Right cardiac atrium (tissue), 5 donors: ENCODE measurements at regions of chr19 and their contacts with region 1.

Region 1: GRCh38 chr19:16111160-16111908 is at the start of gene RAB8A:
- DNase-seq: peak; percentile 99 to 100 (median 99)
- ATAC-seq: peak; percentile 98
- H3K4me3 ChIP-seq: peak within 1 kb of the TSS; percentile 83
- H3K27ac ChIP-seq: peak within 1 kb of the TSS; percentile 71
- H3K4me1 ChIP-seq: peaks cover 8% of the 10 kb centered on the region
- H3K27me3 ChIP-seq: no peaks in the 10 kb centered on the region
- total RNA-seq, gene RAB8A: 22.6 to 30.0 (median 24.5) TPM

Region 2: GRCh38 chr19:16062789-16063188 is 48.5 kb before region 1 on chr19:
- intact Hi-C with region 1: loop called in 1 of 4 experiments (anchors 10 kb)
- DNase-seq: peak in 2 of 3 donors; percentile 78 to 79
- ATAC-seq: no peak
- H3K4me3 ChIP-seq: no peak overlapping the region
- H3K27ac ChIP-seq: no peak overlapping the region
- H3K4me1 ChIP-seq: no peaks in the 10 kb centered on the region
- H3K27me3 ChIP-seq: no peaks in the 10 kb centered on the region

Region 3: DNA sequence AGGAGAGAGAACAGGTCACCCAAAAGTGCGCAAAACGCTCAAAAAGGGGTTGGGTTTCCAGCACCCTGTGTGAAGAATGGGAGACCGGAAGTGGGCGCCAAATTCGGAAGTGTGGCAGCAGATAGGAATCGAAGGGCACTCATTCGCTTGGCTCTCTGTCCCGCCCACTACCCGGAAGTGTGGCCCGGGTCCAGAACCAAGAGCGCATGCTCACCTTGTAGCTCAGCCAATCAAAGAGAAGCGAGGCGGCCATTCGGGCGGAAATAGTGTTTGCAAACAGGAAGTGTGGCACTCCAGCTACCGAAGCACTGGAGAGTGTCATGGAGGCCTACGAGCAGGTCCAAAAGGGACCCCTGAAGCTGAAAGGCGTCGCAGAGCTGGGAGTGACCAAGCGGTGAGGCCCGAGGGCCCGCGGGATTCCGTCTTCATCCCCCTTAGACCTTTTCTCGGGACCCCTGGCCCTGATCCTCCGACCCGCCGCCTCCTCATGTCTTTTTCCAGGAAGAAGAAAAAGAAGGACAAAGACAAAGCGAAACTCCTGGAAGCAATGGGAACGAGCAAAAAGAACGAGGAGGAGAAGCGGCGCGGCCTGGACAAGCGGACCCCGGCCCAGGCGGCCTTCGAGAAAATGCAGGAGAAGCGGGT is 73.9 kb after region 1 on chr19 and contains the start of gene FAM32A:
- intact Hi-C with region 1: loop called in 1 of 4 experiments (anchors 10 kb)
- DNase-seq: peak; percentile 99
- ATAC-seq: peak; percentile 98
- H3K4me3 ChIP-seq: peak within 1 kb of the TSS; percentile 99
- H3K27ac ChIP-seq: peak within 1 kb of the TSS; percentile 84
- H3K4me1 ChIP-seq: no peaks in the 10 kb centered on the region
- H3K27me3 ChIP-seq: no peaks in the 10 kb centered on the region
- total RNA-seq, gene FAM32A: 37.5 to 42.5 (median 40.1) TPM